ENCODE measurements at regions of chr2 and their contacts with region 1.

Region 1: GRCh38 chr2:229910832-229911412 is 10.9 kb downstream of the TRIP12 start:
- DNase-seq: no peak
- ATAC-seq: peak; percentile 87
- H3K4me3 ChIP-seq: no peak overlapping the region
- H3K27ac ChIP-seq: no peak overlapping the region
- H3K4me1 ChIP-seq: peaks cover 9 to 10% of the 10 kb centered on the region in 2 experiments; a peak in 2 of 4 replicates
- H3K27me3 ChIP-seq: no peaks in the 10 kb centered on the region
- CTCF ChIP-seq: peak; percentile 34 to 46 (median 36); a peak in 5 of 6 replicates
- POLR2A ChIP-seq: no peak
- RAD21 ChIP-seq: peak; percentile 49

Region 2: GRCh38 chr2:229695946-229696345 is 215.0 kb before region 1 on chr2:
- CTCF ChIA-PET with region 1: no interaction called
- POLR2A ChIA-PET with region 1: no interaction called
- RAD21 ChIA-PET with region 1: no interaction called
- intact Hi-C with region 1: no loop called
- DNase-seq: no peak
- ATAC-seq: no peak
- H3K4me3 ChIP-seq: no peak overlapping the region
- H3K27ac ChIP-seq: no peak overlapping the region
- H3K4me1 ChIP-seq: no peaks in the 10 kb centered on the region
- H3K27me3 ChIP-seq: no peaks in the 10 kb centered on the region; the same call in 1 of the 2 replicates
- CTCF ChIP-seq: no peak
- POLR2A ChIP-seq: no peak
- RAD21 ChIP-seq: no peak

Region 3: GRCh38 chr2:229714736-229715541 is 196.0 kb before region 1 on chr2:
- CTCF ChIA-PET with region 1: no interaction called
- POLR2A ChIA-PET with region 1: no interaction called
- RAD21 ChIA-PET with region 1: no interaction called
- intact Hi-C with region 1: no loop called
- DNase-seq: no peak
- ATAC-seq: peak; percentile 50
- H3K4me3 ChIP-seq: peak overlapping the region; percentile 19 to 33; a peak in 3 of 4 replicates
- H3K27ac ChIP-seq: no peak overlapping the region
- H3K4me1 ChIP-seq: peaks cover 0 to 11% of the 10 kb centered on the region in 2 experiments; a peak in 2 of 4 replicates
- H3K27me3 ChIP-seq: peaks cover 25% of the 10 kb centered on the region
- CTCF ChIP-seq: no peak
- POLR2A ChIP-seq: no peak
- RAD21 ChIP-seq: no peak

Region 4: DNA sequence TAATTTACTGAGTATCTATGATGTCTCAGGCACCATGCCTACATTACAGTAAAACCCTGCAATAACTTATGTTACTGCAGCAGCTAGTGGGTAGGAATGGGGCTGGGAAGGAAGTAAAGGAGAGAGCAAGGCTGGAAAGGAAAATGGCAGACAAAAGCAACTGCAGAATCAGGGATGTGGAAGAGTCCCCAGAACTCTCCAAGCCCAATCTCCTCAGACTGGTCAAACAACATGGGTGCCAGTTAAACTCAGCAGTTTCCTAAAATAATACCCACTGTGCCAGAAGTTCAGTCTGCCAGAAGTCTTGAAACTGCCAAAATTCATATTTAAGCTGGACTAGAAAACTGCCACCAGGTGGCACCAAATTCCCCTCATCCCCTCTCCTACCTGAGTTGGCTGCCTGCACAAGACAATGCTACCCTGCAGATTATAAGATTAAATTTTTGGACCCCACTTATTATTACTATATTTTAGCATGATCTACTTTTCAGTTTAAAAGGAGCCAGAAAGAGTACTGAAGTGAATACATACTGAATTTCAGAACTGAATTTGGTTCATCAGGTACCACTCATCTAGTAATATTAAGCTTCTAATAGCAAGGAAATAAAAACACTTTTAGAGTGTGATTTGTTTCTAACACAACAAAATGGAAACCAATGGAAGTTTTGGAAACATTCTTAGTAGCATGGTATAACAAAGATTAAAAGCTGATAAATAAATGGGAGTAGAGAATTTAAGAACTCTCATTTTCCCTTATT is 109.7 kb before region 1 on chr2:
- CTCF ChIA-PET with region 1: interaction called, 12 read pairs
- POLR2A ChIA-PET with region 1: no interaction called
- RAD21 ChIA-PET with region 1: interaction called in 1 of 2 experiments, 5 read pairs
- intact Hi-C with region 1: loop called (anchors 1 kb)
- DNase-seq: peak; percentile 58
- ATAC-seq: peak; percentile 81
- H3K4me3 ChIP-seq: no peak overlapping the region
- H3K27ac ChIP-seq: peak overlapping the region; percentile 15; the same call in 1 of the 2 replicates
- H3K4me1 ChIP-seq: no peaks in the 10 kb centered on the region
- H3K27me3 ChIP-seq: no peaks in the 10 kb centered on the region
- CTCF ChIP-seq: peak; percentile 49 to 78 (median 70); a peak in 5 of 6 replicates
- POLR2A ChIP-seq: no peak
- RAD21 ChIP-seq: peak; percentile 78

Region 5: DNA sequence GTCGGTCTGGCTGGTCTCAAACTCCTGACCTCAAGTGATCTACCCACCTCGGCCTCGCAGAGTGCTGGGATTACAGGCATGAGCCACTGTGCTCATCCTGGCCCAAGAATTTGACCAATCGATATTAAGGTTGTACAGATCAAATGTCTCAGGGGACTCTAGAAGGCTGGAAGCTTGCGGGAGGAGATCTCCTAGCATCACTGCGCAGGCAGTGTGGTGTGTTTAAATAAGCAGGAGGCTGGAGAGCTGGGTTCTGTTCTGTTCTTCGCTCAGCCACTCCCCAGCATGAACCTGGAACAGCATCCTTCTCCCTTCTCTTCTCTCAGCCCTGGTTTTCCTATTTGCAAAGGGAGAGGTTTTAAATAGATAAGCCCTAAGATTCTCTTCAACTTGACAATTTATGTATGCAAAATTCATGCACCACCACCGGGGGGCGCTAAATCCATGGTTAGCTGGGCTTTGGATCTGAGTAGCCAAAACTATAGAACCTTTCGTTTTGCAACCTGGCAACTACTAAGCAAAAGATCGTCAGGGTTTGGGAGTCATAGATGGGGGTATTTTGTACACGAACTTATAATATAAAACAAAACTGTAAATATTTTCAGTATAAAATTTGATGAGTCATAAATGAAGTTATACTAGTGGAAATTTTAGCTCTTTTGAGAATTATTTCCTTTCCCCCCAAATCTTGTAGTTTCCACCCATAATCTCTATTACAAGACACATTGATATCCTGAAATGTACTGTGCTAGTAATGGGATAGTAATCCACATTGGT is 97.2 kb after region 1 on chr2:
- CTCF ChIA-PET with region 1: no interaction called
- POLR2A ChIA-PET with region 1: no interaction called
- RAD21 ChIA-PET with region 1: no interaction called
- intact Hi-C with region 1: no loop called
- DNase-seq: peak; percentile 46
- ATAC-seq: peak; percentile 80
- H3K4me3 ChIP-seq: no peak overlapping the region
- H3K27ac ChIP-seq: no peak overlapping the region
- H3K4me1 ChIP-seq: peaks cover 2 to 7% of the 10 kb centered on the region in 2 experiments; a peak in 2 of 4 replicates
- H3K27me3 ChIP-seq: no peaks in the 10 kb centered on the region
- CTCF ChIP-seq: peak; percentile 75 to 93 (median 88)
- POLR2A ChIP-seq: no peak
- RAD21 ChIP-seq: peak; percentile 92

Measured in HCT116 (cell line).